BJ (cell line): ENCODE measurements at regions of chr4 and their contacts with region 1.

Region 1: GRCh38 chr4:147968641-147969040 is 236.8 kb downstream of the ARHGAP10 start:
- DNase-seq: no peak
- H3K4me3 ChIP-seq: no peak overlapping the region
- H3K27me3 ChIP-seq: no peaks in the 10 kb centered on the region
- CTCF ChIP-seq: no peak

Region 2: GRCh38 chr4:147786031-147786430 is 182.6 kb before region 1 on chr4:
- CTCF ChIA-PET with region 1: no interaction called
- POLR2A ChIA-PET with region 1: no interaction called
- DNase-seq: no peak
- H3K4me3 ChIP-seq: no peak overlapping the region
- H3K27me3 ChIP-seq: no peaks in the 10 kb centered on the region
- CTCF ChIP-seq: no peak

Region 3: GRCh38 chr4:148017836-148018235 is 49.2 kb after region 1 on chr4:
- CTCF ChIA-PET with region 1: no interaction called
- POLR2A ChIA-PET with region 1: interaction called, 20 read pairs
- DNase-seq: no peak
- H3K4me3 ChIP-seq: no peak overlapping the region
- H3K27me3 ChIP-seq: no peaks in the 10 kb centered on the region
- CTCF ChIP-seq: no peak

Region 4: GRCh38 chr4:148539387-148539786 is 570.7 kb after region 1 on chr4:
- CTCF ChIA-PET with region 1: no interaction called
- POLR2A ChIA-PET with region 1: no interaction called
- DNase-seq: no peak
- H3K4me3 ChIP-seq: no peak overlapping the region
- H3K27me3 ChIP-seq: no peaks in the 10 kb centered on the region
- CTCF ChIP-seq: no peak